Naive thymus-derived CD4-positive, alpha-beta T cell (primary cell): ENCODE measurements at regions of chr10 and their contacts with region 1.

Region 1: DNA sequence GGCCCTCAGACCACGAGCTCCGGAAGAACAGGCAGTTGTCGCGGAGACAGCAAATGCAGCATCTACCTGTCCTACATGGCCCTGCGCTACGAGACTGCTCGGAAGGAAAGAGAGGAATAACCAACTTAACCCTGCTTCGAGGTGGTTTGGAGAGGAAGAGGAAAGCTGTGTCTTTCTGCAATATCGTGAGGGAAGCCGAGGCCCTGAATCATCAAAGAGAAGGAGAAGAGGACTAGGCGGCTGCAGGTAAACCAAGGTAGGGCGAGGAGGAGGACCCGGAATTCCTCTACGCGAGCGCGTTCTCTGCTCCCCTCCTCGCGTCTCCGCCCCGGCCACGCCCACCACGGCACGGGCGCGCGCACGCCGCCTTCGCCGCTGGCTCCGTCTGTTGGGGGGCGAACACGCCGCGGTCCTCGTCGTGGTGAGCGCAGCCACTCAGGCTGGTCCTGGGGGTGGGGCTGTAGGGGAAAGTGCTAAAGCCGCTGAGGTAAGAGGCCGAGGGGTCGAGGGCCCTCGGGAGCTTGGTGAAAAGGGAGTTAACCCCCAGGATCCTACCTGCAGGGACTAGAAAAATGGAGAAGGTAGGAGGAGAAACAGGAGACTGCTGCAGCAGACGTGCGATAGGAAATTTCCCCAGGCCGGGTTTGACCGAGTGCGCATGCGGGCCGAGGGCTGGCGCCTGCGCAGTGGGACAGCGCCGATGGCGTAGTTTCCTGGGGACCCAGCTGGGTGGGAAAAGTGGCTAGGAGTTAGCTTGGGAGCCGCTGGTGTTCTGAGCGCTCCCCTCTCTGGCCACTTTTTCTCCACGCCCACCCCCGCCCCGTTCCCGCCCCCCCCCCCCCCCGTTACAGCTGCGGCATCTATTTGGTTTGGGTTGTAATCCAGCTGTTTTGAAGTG is at the starts of genes ANAPC16 and ASCC1:
- DNase-seq: peak; percentile 90 to 99 (median 97)
- ATAC-seq: peak; percentile 95
- H3K4me3 ChIP-seq: peak within 1 kb of the TSS; percentile 66
- H3K4me3 Mint-ChIP-seq: peak within 1 kb of the TSS; percentile 84 to 100 (median 97)
- H3K27ac ChIP-seq: peak within 1 kb of the TSS; percentile 95
- H3K27ac Mint-ChIP-seq: peak within 1 kb of the TSS; percentile 93 to 100 (median 99)
- H3K4me1 ChIP-seq: peaks cover 22 to 49% of the 10 kb centered on the region in 2 donors
- H3K4me1 Mint-ChIP-seq: peaks cover 14 to 62% (median 47%) of the 10 kb centered on the region in 7 donors
- H3K27me3 ChIP-seq: no peaks in the 10 kb centered on the region
- H3K27me3 Mint-ChIP-seq: no peaks in the 10 kb centered on the region
- total RNA-seq, gene ANAPC16: 85.5 to 131 (median 105) TPM
- total RNA-seq, gene ASCC1: 19.4 to 33.1 (median 24.2) TPM

Region 2: DNA sequence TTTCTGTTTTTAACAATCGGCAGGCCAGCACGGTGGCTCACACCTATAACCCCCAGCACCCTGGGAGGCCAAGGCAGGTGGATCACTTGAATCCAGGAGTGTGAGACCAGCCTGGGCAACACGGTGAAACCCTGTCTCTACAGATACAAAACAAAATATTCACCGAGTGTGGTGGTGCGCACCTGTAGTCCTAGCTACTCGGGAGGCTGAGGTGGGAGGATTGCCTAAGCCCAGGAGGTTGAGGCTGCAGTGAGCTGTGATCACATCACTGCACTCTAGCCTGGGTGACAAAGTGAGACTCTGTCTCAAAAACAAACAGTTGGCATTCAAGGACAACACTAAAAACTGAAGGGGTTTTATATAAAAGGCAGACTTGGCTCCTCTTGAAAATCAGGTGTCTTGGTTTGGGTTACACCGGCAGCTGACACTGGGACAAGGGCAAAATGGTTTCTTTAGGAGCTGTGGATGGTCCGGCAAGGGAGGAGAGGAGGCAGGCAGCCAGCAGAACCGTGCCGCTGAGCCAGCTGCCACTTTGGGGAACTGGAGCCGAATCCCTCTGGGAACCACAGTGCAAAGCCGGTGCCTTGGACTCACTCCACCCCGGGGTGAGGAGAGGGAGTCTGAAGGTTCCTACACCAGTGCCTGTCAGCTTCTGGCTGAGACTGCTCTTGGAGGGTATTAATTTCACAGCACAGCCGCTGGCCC is 199.1 kb before region 1 on chr10:
- CTCF ChIA-PET with region 1: no interaction called
- POLR2A ChIA-PET with region 1: no interaction called
- intact Hi-C with region 1: no loop called
- DNase-seq: no peak
- ATAC-seq: no peak
- H3K4me3 ChIP-seq: no peak overlapping the region
- H3K4me3 Mint-ChIP-seq: no peak overlapping the region
- H3K27ac ChIP-seq: no peak overlapping the region
- H3K27ac Mint-ChIP-seq: no peak overlapping the region
- H3K4me1 ChIP-seq: no peaks in the 10 kb centered on the region
- H3K4me1 Mint-ChIP-seq: peaks cover 0 to 4% (median 0%) of the 10 kb centered on the region in 7 donors
- H3K27me3 ChIP-seq: no peaks in the 10 kb centered on the region
- H3K27me3 Mint-ChIP-seq: peaks cover 0 to 9% (median 4%) of the 10 kb centered on the region in 5 donors

Region 3: GRCh38 chr10:72107325-72108003 is 108.4 kb before region 1 on chr10:
- CTCF ChIA-PET with region 1: no interaction called
- POLR2A ChIA-PET with region 1: interaction called, 16 read pairs
- intact Hi-C with region 1: no loop called
- DNase-seq: peak in 7 of 9 donors; percentile 63 to 77 (median 74)
- ATAC-seq: peak; percentile 82
- H3K4me3 ChIP-seq: peak overlapping the region; percentile 10
- H3K4me3 Mint-ChIP-seq: peak overlapping the region; percentile 67 to 85 (median 78)
- H3K27ac ChIP-seq: peak overlapping the region; percentile 72
- H3K27ac Mint-ChIP-seq: peak overlapping the region; percentile 79 to 96 (median 89)
- H3K4me1 ChIP-seq: peaks cover 32 to 84% of the 10 kb centered on the region in 2 donors
- H3K4me1 Mint-ChIP-seq: peaks cover 53 to 96% (median 89%) of the 10 kb centered on the region in 7 donors
- H3K27me3 ChIP-seq: no peaks in the 10 kb centered on the region
- H3K27me3 Mint-ChIP-seq: no peaks in the 10 kb centered on the region

Region 4: DNA sequence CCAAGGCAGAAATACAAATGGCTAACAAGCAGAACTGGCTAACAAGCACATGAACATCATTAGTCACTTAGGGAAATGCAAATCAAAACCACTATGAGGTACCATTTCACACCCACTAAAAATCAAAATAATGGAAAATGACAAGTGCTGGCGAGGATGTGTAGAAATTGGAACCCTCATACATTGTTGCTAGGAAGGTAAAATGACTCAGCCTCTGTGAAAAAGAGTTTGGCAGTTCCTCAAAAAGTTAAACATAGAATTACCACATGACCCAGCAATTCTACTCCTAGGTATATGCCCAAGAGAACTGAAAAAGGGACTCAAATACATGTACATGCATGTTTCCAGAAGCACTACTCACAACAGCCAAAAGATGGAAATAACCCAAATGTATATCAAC is 52.9 kb before region 1 on chr10:
- CTCF ChIA-PET with region 1: no interaction called
- POLR2A ChIA-PET with region 1: interaction called, 4 read pairs
- intact Hi-C with region 1: loop called in 1 of 2 experiments (anchors 10 kb)
- DNase-seq: no peak
- ATAC-seq: peak; percentile 40
- H3K4me3 ChIP-seq: no peak overlapping the region
- H3K4me3 Mint-ChIP-seq: no peak overlapping the region
- H3K27ac ChIP-seq: no peak overlapping the region
- H3K27ac Mint-ChIP-seq: no peak overlapping the region
- H3K4me1 ChIP-seq: peaks cover 0 to 4% of the 10 kb centered on the region in 2 donors
- H3K4me1 Mint-ChIP-seq: peaks cover 0 to 16% (median 13%) of the 10 kb centered on the region in 7 donors
- H3K27me3 ChIP-seq: no peaks in the 10 kb centered on the region
- H3K27me3 Mint-ChIP-seq: no peaks in the 10 kb centered on the region

Region 5: DNA sequence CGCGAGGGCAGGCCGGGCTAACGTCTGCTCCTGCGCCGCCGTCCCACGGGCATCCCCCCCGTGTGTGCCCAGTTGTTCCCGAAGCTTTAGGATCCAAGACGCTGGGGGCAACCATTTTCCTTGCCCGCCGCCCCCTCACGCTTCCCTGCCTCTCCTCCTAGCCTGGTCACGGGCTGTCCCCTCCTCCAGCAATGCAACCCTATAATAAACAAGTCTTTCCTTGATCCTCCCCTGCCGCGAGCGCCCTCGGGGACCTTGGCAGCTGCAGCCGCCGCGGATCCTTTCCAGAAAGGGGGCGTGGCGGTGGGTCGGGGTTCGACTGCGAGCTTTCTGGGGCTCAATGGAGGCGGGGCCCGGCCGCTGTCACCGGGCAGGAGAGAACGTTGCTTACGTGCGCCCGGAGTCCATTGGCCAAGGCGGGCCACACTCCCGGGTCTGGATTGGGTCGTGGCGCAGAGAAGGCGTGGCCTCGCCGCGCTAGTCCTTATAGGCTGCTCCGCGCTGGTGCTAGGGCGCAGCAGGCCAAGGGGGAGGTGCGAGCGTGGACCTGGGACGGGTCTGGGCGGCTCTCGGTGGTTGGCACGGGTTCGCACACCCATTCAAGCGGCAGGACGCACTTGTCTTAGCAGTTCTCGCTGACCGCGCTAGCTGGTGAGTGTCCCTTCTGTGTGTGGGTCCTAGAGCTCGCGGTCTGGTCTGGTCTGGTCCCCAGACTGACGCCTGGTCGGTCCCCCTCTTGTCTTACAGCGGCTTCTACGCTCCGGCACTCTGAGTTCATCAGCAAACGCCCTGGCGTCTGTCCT is 57.7 kb after region 1 on chr10 and contains the start of gene DDIT4:
- CTCF ChIA-PET with region 1: interaction called, 9 read pairs
- POLR2A ChIA-PET with region 1: interaction called, 29 read pairs
- intact Hi-C with region 1: loop called (anchors 1 kb)
- DNase-seq: peak; percentile 92 to 98 (median 97)
- ATAC-seq: peak; percentile 97
- H3K4me3 ChIP-seq: peak within 1 kb of the TSS; percentile 95
- H3K4me3 Mint-ChIP-seq: peak within 1 kb of the TSS; percentile 97 to 100 (median 99)
- H3K27ac ChIP-seq: peak within 1 kb of the TSS; percentile 96
- H3K27ac Mint-ChIP-seq: peak within 1 kb of the TSS; percentile 93 to 98 (median 95)
- H3K4me1 ChIP-seq: peaks cover 9 to 20% of the 10 kb centered on the region in 2 donors
- H3K4me1 Mint-ChIP-seq: peaks cover 34 to 63% (median 59%) of the 10 kb centered on the region in 7 donors
- H3K27me3 ChIP-seq: no peaks in the 10 kb centered on the region
- H3K27me3 Mint-ChIP-seq: no peaks in the 10 kb centered on the region
- total RNA-seq, gene DDIT4: 25.4 to 335 (median 135) TPM

Region 6: GRCh38 chr10:72331601-72332422 is 115.9 kb after region 1 on chr10:
- CTCF ChIA-PET with region 1: interaction called, 13 read pairs
- POLR2A ChIA-PET with region 1: interaction called, 17 read pairs
- intact Hi-C with region 1: loop called in 1 of 2 experiments (anchors 2 kb)
- DNase-seq: peak; percentile 77 to 94 (median 91)
- ATAC-seq: peak; percentile 84
- H3K4me3 ChIP-seq: peak overlapping the region; percentile 61
- H3K4me3 Mint-ChIP-seq: peak overlapping the region; percentile 76 to 93 (median 84)
- H3K27ac ChIP-seq: peak overlapping the region; percentile 79
- H3K27ac Mint-ChIP-seq: peak overlapping the region; percentile 94 to 99 (median 98)
- H3K4me1 ChIP-seq: peaks cover 84 to 94% of the 10 kb centered on the region in 2 donors
- H3K4me1 Mint-ChIP-seq: peaks cover 52 to 95% (median 90%) of the 10 kb centered on the region in 7 donors
- H3K27me3 ChIP-seq: no peaks in the 10 kb centered on the region
- H3K27me3 Mint-ChIP-seq: no peaks in the 10 kb centered on the region

Region 7: DNA sequence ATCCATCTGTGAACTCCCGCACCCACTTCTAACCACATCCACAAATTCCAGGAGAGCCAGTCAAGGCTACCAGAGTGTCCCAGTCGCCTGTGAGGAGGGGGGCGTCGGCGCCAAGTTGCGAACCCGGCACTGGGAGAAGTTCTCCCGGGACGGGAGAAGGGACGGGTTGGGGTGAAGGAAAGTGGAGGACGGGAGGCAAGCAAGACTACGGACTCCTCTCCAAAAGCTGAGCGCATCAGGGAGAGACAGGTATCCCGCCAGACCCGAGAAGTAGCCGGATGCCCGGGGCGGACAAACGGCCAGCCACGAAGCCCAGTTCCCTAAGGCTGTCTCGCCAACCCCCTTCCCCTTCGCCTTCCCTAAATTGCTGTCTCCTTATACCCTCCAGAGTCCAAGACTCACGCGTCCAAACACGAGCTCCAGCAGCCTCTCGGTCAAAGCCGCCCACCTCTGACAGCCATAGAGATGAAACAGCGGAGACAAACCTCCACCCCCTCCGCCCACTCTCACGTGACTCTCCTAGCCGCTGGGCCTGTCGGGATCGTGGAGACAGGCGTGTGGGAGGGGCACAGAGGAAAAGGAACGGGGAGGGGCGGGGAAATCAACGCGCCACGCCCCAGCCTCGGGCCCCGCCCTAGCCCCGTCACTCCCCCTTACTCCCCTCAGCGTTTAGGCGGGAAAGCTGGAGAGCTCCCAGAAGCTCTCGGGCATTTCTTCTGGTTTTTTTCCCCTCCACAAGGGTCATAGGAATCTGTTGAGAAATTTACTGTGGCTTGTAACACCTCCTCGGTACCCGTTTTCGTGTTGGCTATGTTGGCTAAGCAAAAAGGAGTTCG is 409.9 kb after region 1 on chr10 and contains the start of gene MICU1:
- CTCF ChIA-PET with region 1: no interaction called
- POLR2A ChIA-PET with region 1: no interaction called
- intact Hi-C with region 1: loop called in 1 of 2 experiments (anchors 1 kb)
- DNase-seq: peak; percentile 74 to 93 (median 90)
- ATAC-seq: peak; percentile 100
- H3K4me3 ChIP-seq: peak within 1 kb of the TSS; percentile 97
- H3K4me3 Mint-ChIP-seq: peak within 1 kb of the TSS; percentile 97 to 100 (median 100)
- H3K27ac ChIP-seq: peak within 1 kb of the TSS; percentile 76
- H3K27ac Mint-ChIP-seq: peak within 1 kb of the TSS; percentile 83 to 99 (median 97)
- H3K4me1 ChIP-seq: peaks cover 11 to 16% of the 10 kb centered on the region in 2 donors
- H3K4me1 Mint-ChIP-seq: peaks cover 11 to 28% (median 16%) of the 10 kb centered on the region in 7 donors
- H3K27me3 ChIP-seq: no peaks in the 10 kb centered on the region
- H3K27me3 Mint-ChIP-seq: peaks cover 0 to 8% (median 0%) of the 10 kb centered on the region in 5 donors
- total RNA-seq, gene MICU1: 20.8 to 39.6 (median 26.3) TPM

Region 8: GRCh38 chr10:72834183-72834825 is 618.4 kb after region 1 on chr10:
- CTCF ChIA-PET with region 1: no interaction called
- POLR2A ChIA-PET with region 1: no interaction called
- intact Hi-C with region 1: no loop called
- DNase-seq: peak in 7 of 9 donors; percentile 28 to 61 (median 43)
- ATAC-seq: peak; percentile 73
- H3K4me3 ChIP-seq: no peak overlapping the region
- H3K4me3 Mint-ChIP-seq: no peak overlapping the region
- H3K27ac ChIP-seq: no peak overlapping the region
- H3K27ac Mint-ChIP-seq: no peak overlapping the region
- H3K4me1 ChIP-seq: no peaks in the 10 kb centered on the region
- H3K4me1 Mint-ChIP-seq: peaks cover 0 to 1% (median 0%) of the 10 kb centered on the region in 7 donors
- H3K27me3 ChIP-seq: no peaks in the 10 kb centered on the region
- H3K27me3 Mint-ChIP-seq: no peaks in the 10 kb centered on the region